ENCODE measurements at regions of chr2 and their contacts with region 1.

Region 1: DNA sequence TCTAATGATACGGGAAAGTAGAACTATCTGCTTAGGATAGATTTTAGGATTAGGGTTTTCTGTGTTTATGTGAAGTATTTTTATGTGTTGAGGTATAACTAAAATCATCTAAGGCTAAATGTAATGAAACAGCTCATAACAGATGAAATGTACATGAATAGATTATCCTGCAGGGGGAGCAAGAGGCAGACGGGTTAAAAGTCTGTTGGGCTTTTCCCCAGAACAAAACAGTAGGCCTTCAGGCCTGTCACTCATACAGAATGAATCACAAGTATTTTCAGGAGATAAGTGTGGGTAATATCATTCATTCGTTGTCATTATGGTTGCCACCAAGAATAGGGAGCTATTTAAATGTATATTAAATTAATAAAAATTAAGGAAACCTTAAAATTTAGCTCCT is 107.9 kb upstream of the IL1R2 start:
- DNase-seq: peak; percentile 60
- H3K4me3 Mint-ChIP-seq: no peak overlapping the region
- H3K27ac Mint-ChIP-seq: peak overlapping the region; percentile 2
- H3K4me1 Mint-ChIP-seq: peaks cover 21% of the 10 kb centered on the region
- H3K27me3 Mint-ChIP-seq: no peaks in the 10 kb centered on the region

Region 2: GRCh38 chr2:101873543-101873942 is 10.3 kb before region 1 on chr2:
- CTCF ChIA-PET with region 1: interaction called, 30 read pairs
- POLR2A ChIA-PET with region 1: no interaction called
- intact Hi-C with region 1: no loop called
- DNase-seq: no peak
- H3K4me3 Mint-ChIP-seq: no peak overlapping the region
- H3K27ac Mint-ChIP-seq: no peak overlapping the region
- H3K4me1 Mint-ChIP-seq: peaks cover 7% of the 10 kb centered on the region
- H3K27me3 Mint-ChIP-seq: no peaks in the 10 kb centered on the region

Region 3: DNA sequence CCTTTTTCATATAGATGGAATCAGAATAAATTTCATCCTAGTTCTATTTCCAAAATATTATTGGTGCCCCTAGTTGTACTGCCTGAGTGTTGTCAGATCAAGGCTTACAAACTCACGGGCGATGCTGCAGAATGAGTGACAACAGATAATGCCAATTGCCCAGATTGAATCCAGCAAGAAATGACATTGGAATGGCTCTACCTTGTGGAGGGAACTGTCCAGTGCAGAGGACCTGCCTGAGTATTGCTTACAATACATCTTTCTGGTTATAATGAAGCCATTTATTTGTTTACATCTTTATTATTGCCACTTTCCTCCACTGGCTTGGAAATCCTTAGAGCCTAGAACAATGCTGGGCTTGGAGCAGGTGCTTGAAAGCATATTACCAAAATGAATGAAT is 100.1 kb after region 1 on chr2:
- CTCF ChIA-PET with region 1: interaction called, 10 read pairs
- POLR2A ChIA-PET with region 1: no interaction called
- intact Hi-C with region 1: no loop called
- DNase-seq: no peak
- H3K4me3 Mint-ChIP-seq: no peak overlapping the region
- H3K27ac Mint-ChIP-seq: no peak overlapping the region
- H3K4me1 Mint-ChIP-seq: no peaks in the 10 kb centered on the region
- H3K27me3 Mint-ChIP-seq: peaks cover 1% of the 10 kb centered on the region

Region 4: GRCh38 chr2:102005989-102006885 is 122.4 kb after region 1 on chr2:
- CTCF ChIA-PET with region 1: interaction called, 51 read pairs
- POLR2A ChIA-PET with region 1: interaction called, 6 read pairs
- intact Hi-C with region 1: loop called (anchors 1 kb)
- DNase-seq: peak; percentile 51
- H3K4me3 Mint-ChIP-seq: peak overlapping the region; percentile 33
- H3K27ac Mint-ChIP-seq: no peak overlapping the region
- H3K4me1 Mint-ChIP-seq: peaks cover 21% of the 10 kb centered on the region
- H3K27me3 Mint-ChIP-seq: peaks cover 1% of the 10 kb centered on the region

Region 5: GRCh38 chr2:102166189-102166845 is 282.5 kb after region 1 on chr2:
- CTCF ChIA-PET with region 1: interaction called, 16 read pairs
- POLR2A ChIA-PET with region 1: no interaction called
- intact Hi-C with region 1: loop called (anchors 1 kb)
- DNase-seq: no peak
- H3K4me3 Mint-ChIP-seq: no peak overlapping the region
- H3K27ac Mint-ChIP-seq: no peak overlapping the region
- H3K4me1 Mint-ChIP-seq: peaks cover 5% of the 10 kb centered on the region
- H3K27me3 Mint-ChIP-seq: no peaks in the 10 kb centered on the region

Region 6: DNA sequence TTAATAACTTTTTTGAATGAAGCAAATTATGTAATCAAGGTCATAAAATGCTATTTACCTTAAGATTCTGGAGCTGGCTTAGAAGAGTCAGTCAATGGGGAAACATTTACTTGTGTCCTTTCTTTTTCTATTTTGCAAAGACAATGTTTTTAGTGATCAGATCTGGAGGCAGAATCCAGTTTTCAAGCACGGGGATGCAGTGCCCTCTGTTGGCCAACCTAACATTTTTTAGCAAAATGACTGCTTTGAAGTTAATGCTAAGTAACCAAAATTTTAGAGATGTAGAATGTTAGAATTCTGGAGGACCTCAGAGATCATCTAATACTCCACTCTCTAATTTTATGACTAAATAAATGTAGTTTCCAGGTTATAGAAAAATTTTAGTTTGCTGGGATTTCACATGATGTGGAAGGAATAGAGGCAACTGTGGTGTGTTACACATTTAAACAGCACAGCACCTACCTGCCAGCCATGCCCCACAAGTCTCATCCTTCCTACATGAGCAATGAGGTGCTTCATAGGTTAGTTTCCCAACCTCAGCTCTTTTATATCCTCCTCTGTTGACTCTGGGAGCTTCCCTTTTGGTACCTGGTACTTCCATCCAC is 565.6 kb after region 1 on chr2:
- CTCF ChIA-PET with region 1: interaction called, 12 read pairs
- POLR2A ChIA-PET with region 1: no interaction called
- intact Hi-C with region 1: loop called (anchors 2 kb)
- DNase-seq: peak; percentile 82
- H3K4me3 Mint-ChIP-seq: no peak overlapping the region
- H3K27ac Mint-ChIP-seq: no peak overlapping the region
- H3K4me1 Mint-ChIP-seq: no peaks in the 10 kb centered on the region
- H3K27me3 Mint-ChIP-seq: peaks cover 1% of the 10 kb centered on the region